Activated CD4-positive, alpha-beta T cell treated with anti-CD3 and anti-CD28 coated beads, Interleukin-2, amount 10 ng/mL, durations not matched to agents 24 days and 14 days (primary cell): ENCODE measurements at regions of chr6 and their contacts with region 1.

Region 1: DNA sequence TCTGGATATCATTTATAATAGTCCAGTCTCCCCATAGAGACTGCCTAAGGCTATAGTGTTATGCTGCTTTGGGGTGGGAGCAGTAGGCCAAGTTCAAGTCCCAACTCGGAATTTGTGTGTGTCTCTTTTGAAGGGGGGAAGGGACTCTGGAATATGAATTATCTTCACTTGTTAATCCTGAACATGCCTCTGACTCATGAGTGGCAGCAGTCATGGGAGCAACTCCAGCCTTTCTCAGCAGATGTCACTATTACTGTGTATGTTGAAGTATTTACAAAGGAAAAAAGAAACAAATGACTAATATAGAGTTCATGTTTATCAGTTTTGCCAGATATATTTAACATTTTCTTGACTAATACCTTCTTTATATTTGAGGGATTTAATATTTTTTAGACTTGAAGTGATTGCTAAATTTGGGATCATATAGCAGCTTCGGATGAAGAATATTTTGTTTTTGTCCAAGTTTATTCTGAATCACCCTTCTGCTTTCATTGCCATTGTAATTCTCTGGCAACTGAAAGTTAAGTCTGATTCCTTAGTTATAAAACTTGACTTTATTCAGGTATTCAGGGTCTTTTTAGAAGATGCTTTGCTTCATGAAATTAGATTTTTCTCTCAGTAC is 23.4 kb downstream of the FAM217A start:
- DNase-seq: peak; percentile 71
- H3K4me3 Mint-ChIP-seq: no peak overlapping the region
- H3K27ac Mint-ChIP-seq: no peak overlapping the region
- H3K4me1 Mint-ChIP-seq: peaks cover 23% of the 10 kb centered on the region
- H3K27me3 Mint-ChIP-seq: no peaks in the 10 kb centered on the region

Region 2: DNA sequence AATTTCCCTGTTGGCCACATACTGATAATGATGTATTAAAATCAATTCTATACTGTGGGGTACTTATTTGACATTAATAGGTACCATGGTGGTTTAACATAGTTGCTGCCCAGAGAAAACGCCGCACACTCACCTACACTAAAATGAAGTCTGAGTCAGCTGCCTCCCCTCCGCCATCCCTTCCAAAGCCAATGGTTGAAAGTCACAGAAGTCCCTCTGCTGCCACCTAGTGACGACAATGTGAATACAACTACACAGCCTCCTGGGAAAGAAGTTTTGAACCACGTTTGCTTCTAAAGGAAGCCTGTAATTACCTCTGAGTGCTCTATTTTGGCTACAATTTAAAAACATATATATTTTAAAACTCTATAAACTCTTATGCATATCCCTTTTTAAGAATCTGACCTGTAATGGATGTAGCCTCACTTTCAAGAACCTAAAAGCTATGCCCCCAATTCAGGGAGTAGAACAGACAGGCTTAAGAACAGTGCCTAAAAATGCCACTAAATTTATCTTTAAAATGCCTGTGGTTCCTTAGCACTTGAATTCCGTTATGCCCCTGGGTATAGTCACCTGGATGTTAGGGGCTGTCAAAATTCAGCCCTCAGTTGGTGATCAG is 100.4 kb after region 1 on chr6:
- intact Hi-C with region 1: loop called (anchors 1 kb)
- DNase-seq: peak; percentile 94
- H3K4me3 Mint-ChIP-seq: no peak overlapping the region
- H3K27ac Mint-ChIP-seq: peak overlapping the region; percentile 56
- H3K4me1 Mint-ChIP-seq: peaks cover 4% of the 10 kb centered on the region
- H3K27me3 Mint-ChIP-seq: peaks cover 7% of the 10 kb centered on the region

Region 3: GRCh38 chr6:4210629-4211423 is 155.3 kb after region 1 on chr6:
- intact Hi-C with region 1: loop called (anchors 5 kb)
- DNase-seq: peak; percentile 87
- H3K4me3 Mint-ChIP-seq: no peak overlapping the region
- H3K27ac Mint-ChIP-seq: no peak overlapping the region
- H3K4me1 Mint-ChIP-seq: peaks cover 18% of the 10 kb centered on the region
- H3K27me3 Mint-ChIP-seq: peaks cover 2% of the 10 kb centered on the region

Region 4: DNA sequence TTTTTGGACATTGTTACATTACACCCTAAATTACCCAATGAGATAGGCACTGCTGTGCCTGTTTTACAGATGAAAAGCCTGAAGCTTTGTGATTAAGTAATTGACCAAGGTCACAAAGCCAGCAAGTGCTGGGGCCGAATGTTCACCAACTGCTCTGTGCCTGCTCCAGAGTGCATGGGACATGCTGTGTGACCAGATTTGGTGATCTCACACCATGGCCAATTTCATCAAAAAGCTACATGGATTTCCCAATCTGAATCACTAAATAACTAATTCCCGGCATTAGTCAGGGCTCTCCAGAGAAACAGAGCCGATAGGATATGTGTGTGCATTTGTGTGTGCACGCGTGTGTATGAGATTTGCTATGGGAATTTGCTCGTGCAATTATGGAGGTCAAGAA is 308.1 kb after region 1 on chr6:
- intact Hi-C with region 1: loop called (anchors 5 kb)
- DNase-seq: no peak
- H3K4me3 Mint-ChIP-seq: no peak overlapping the region
- H3K27ac Mint-ChIP-seq: no peak overlapping the region
- H3K4me1 Mint-ChIP-seq: no peaks in the 10 kb centered on the region
- H3K27me3 Mint-ChIP-seq: no peaks in the 10 kb centered on the region